A673 (cell line): ENCODE measurements at regions of chr6 and their contacts with region 1.

Region 1: DNA sequence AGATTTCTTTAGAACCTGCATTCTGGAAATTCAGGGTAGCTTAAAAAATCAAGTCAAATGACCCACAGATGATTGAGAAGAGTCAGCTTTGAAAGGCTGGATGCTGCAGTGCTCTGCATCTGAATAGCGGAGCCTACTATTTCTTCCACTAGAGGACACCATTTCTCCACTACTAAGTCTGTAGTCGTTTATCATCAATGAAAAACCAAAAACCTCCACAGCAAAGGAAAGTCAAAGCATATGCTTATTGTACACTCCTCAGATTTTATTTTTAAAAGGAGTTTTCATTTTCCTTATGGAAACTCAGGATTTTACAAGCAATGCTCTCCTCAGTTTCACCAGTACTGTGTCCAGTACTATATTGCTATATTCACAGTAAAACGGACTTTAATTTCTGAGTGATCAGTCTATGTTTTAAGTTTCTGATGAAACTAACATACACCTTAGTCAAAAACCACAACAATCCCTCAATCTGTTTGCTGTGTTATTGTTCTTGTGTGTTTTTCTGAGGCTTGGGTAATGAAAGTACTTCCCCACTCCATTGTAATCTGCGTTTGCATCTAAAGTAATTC is 50.5 kb upstream of the ENPP5 start:
- DNase-seq: peak; percentile 52
- H3K4me3 ChIP-seq: no peak overlapping the region
- H3K27ac ChIP-seq: no peak overlapping the region
- H3K4me1 ChIP-seq: no peaks in the 10 kb centered on the region
- H3K27me3 ChIP-seq: peaks cover 7% of the 10 kb centered on the region
- CTCF ChIP-seq: peak; percentile 74

Region 2: GRCh38 chr6:46160102-46160501 is 61.2 kb before region 1 on chr6:
- CTCF ChIA-PET with region 1: no interaction called
- POLR2A ChIA-PET with region 1: no interaction called
- intact Hi-C with region 1: no loop called
- DNase-seq: no peak
- H3K4me3 ChIP-seq: no peak overlapping the region
- H3K27ac ChIP-seq: no peak overlapping the region
- H3K4me1 ChIP-seq: no peaks in the 10 kb centered on the region
- H3K27me3 ChIP-seq: peaks cover 7% of the 10 kb centered on the region
- CTCF ChIP-seq: no peak

Region 3: GRCh38 chr6:46626228-46626909 is 405.1 kb after region 1 on chr6:
- CTCF ChIA-PET with region 1: no interaction called
- POLR2A ChIA-PET with region 1: no interaction called
- intact Hi-C with region 1: loop called (anchors 2 kb)
- DNase-seq: peak; percentile 39
- H3K4me3 ChIP-seq: no peak overlapping the region
- H3K27ac ChIP-seq: no peak overlapping the region
- H3K4me1 ChIP-seq: no peaks in the 10 kb centered on the region
- H3K27me3 ChIP-seq: peaks cover 1% of the 10 kb centered on the region
- CTCF ChIP-seq: peak; percentile 64